BJ (cell line): ENCODE measurements at regions of chr1 and their contacts with region 1.

Region 1: GRCh38 chr1:44819608-44820327 is 11.4 kb downstream of the BTBD19 start:
- DNase-seq: peak; percentile 79
- H3K4me3 ChIP-seq: peak overlapping the region; percentile 38
- H3K27me3 ChIP-seq: no peaks in the 10 kb centered on the region
- CTCF ChIP-seq: no peak

Region 2: DNA sequence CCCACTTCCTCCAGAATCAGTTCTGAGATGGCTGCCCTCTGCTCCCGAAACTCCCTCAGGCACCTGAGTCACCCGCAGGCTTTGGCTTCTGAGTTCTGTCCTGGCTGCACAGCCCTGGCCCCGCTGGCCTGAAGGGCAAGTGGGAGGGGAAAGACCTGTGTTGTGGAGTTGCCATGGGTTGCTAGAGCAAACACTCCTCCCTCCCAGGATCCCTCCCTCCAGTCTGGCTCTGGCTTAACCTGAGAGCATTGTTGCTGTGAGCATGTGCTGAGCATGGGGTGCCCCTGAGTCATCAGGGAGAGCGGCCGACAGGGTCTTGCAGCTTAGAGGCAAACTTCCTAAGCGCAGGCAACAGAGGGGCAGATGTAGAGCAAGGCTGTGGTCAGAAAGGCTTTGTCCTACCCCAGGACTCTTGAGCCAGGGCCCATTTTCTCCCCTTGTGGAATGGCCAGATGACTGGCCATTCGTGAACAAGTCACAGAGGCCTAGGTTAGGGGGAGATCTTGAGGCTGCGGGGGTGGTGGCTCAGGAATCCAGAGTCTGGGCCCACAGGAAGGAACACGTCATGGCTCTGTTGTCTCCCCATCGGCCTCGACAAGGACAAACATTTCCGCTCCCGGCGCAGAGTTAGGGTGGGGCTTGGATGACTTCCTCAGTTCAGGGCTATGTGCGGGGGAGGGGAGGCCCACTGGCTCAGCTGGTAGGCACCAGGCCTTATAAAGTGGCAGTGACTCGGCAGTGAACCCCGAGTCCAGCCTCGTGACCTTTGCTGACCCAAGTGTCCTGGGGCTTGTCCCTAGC is 12.3 kb before region 1 on chr1 and contains the start of gene DYNLT4:
- CTCF ChIA-PET with region 1: interaction called, 17 read pairs
- POLR2A ChIA-PET with region 1: interaction called, 9 read pairs
- DNase-seq: peak; percentile 99
- H3K4me3 ChIP-seq: peak within 1 kb of the TSS; percentile 15
- H3K27me3 ChIP-seq: no peaks in the 10 kb centered on the region
- CTCF ChIP-seq: no peak
- polyA plus RNA-seq, gene DYNLT4: 0.26 TPM in 1 of 2 replicates, not detected in the other

Region 3: GRCh38 chr1:44994309-44994898 is 174.6 kb after region 1 on chr1:
- CTCF ChIA-PET with region 1: no interaction called
- POLR2A ChIA-PET with region 1: no interaction called
- DNase-seq: no peak
- H3K4me3 ChIP-seq: no peak overlapping the region
- H3K27me3 ChIP-seq: no peaks in the 10 kb centered on the region
- CTCF ChIP-seq: no peak